Activated CD8-positive, alpha-beta T cell treated with anti-CD3 and anti-CD28 coated beads, Interleukin-2, amount 10 ng/mL, durations not matched to agents 7 days and 5 days (primary cell): ENCODE measurements at regions of chr14 and their contacts with region 1.

Region 1: GRCh38 chr14:90399541-90400444 is 3.0 kb downstream of the CALM1 start:
- DNase-seq: peak; percentile 93
- ATAC-seq: peak; percentile 52
- H3K4me3 Mint-ChIP-seq: peak overlapping the region; percentile 92
- H3K27ac Mint-ChIP-seq: peak overlapping the region; percentile 97
- H3K4me1 Mint-ChIP-seq: peaks cover 47% of the 10 kb centered on the region
- H3K27me3 Mint-ChIP-seq: no peaks in the 10 kb centered on the region

Region 2: GRCh38 chr14:90140956-90141316 is 258.9 kb before region 1 on chr14:
- CTCF ChIA-PET with region 1: no interaction called
- POLR2A ChIA-PET with region 1: no interaction called
- DNase-seq: no peak
- ATAC-seq: no peak
- H3K4me3 Mint-ChIP-seq: no peak overlapping the region
- H3K27ac Mint-ChIP-seq: no peak overlapping the region
- H3K4me1 Mint-ChIP-seq: no peaks in the 10 kb centered on the region
- H3K27me3 Mint-ChIP-seq: peaks cover 13% of the 10 kb centered on the region

Region 3: GRCh38 chr14:90368946-90369721 is 30.7 kb before region 1 on chr14:
- CTCF ChIA-PET with region 1: interaction called, 17 read pairs
- POLR2A ChIA-PET with region 1: interaction called, 4 read pairs
- DNase-seq: no peak
- ATAC-seq: peak; percentile 74
- H3K4me3 Mint-ChIP-seq: no peak overlapping the region
- H3K27ac Mint-ChIP-seq: no peak overlapping the region
- H3K4me1 Mint-ChIP-seq: no peaks in the 10 kb centered on the region
- H3K27me3 Mint-ChIP-seq: no peaks in the 10 kb centered on the region

Region 4: GRCh38 chr14:90419200-90419599 is 19.4 kb after region 1 on chr14:
- CTCF ChIA-PET with region 1: interaction called, 16 read pairs
- POLR2A ChIA-PET with region 1: no interaction called
- DNase-seq: no peak
- ATAC-seq: no peak
- H3K4me3 Mint-ChIP-seq: no peak overlapping the region
- H3K27ac Mint-ChIP-seq: no peak overlapping the region
- H3K4me1 Mint-ChIP-seq: no peaks in the 10 kb centered on the region
- H3K27me3 Mint-ChIP-seq: peaks cover 3% of the 10 kb centered on the region

Region 5: GRCh38 chr14:90531497-90531896 is 131.7 kb after region 1 on chr14:
- CTCF ChIA-PET with region 1: no interaction called
- POLR2A ChIA-PET with region 1: no interaction called
- DNase-seq: no peak
- ATAC-seq: no peak
- H3K4me3 Mint-ChIP-seq: no peak overlapping the region
- H3K27ac Mint-ChIP-seq: no peak overlapping the region
- H3K4me1 Mint-ChIP-seq: no peaks in the 10 kb centered on the region
- H3K27me3 Mint-ChIP-seq: no peaks in the 10 kb centered on the region